G401 (cell line): ENCODE measurements at regions of chr17 and their contacts with region 1.

Region 1: DNA sequence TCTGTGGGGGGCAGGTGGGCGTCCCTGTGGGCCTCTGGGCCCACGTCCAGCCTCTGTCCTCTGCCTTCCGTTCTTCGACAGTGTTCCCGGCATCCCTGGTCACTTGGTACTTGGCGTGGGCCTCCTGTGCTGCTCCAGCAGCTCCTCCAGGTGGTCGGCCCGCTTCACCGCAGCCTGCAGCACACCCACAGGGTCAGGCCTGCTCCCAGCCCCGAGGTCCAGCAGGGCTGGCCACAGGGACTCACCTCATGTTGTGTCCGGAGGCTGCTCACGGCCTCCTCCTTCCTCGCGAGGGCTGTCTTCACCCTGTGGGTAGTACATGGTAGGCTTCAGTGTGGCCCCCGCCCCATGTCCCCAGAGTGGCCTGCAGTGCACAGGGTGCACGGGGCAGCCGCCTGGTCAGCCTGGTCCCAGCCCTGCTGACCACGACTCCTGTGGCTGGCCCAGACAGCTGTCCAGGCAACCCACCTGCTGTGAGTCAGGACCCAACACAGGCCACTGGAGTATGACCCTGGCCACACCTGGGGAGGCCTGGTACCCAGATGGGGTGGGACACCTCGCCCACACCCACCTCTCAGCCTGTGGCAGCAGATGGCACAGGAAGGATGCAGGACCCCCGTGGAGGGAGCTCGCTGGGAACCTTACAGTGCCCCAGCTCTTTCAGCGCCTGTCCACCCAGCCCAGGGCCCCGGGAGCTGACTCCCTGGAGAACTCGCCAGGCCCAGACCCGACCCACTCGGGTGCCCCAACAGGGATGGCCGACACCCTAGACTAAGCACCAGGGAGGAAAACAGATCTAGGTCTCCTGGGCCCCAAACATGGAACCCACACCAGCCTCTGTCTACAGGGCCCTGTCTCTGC is 23.9 kb upstream of the AATK start:
- DNase-seq: no peak

Region 2: DNA sequence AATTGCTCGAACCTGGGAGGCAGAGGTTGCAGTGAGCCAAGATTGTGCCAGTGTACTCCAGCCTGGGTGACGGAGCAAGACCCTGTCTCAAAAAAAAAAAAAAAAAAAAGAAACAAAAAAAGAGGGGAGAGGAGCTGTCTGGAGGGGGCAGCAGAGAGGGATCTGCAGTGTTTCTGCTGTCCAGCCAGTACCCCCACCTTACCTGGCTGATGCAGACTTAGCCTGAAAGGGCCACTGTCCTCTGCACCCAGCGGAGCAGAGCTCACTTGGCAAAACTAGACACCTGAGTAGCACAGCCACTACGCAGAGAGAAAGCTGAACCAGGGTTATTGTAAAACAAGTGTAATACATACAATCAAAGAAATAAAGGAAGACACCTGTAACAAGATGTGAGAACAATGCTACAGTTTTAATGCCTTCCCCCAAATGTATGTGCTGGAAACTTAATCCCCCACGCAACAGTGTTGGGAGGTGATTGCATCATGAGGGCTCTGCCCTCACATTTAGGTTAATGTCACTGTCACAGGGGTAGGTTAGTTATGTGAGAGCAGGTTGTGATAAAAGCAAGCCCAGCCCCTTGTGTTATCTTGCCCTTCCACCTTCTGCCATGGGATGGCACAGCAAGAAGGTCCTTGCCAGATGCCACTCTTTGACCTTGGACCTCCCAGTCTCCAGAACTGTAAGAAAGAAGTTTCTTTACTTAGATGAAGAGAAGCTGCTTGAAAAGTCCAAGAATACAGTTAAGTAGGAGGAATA is 434.1 kb before region 1 on chr17:
- in situ Hi-C with region 1: no loop called
- DNase-seq: no peak

Region 3: DNA sequence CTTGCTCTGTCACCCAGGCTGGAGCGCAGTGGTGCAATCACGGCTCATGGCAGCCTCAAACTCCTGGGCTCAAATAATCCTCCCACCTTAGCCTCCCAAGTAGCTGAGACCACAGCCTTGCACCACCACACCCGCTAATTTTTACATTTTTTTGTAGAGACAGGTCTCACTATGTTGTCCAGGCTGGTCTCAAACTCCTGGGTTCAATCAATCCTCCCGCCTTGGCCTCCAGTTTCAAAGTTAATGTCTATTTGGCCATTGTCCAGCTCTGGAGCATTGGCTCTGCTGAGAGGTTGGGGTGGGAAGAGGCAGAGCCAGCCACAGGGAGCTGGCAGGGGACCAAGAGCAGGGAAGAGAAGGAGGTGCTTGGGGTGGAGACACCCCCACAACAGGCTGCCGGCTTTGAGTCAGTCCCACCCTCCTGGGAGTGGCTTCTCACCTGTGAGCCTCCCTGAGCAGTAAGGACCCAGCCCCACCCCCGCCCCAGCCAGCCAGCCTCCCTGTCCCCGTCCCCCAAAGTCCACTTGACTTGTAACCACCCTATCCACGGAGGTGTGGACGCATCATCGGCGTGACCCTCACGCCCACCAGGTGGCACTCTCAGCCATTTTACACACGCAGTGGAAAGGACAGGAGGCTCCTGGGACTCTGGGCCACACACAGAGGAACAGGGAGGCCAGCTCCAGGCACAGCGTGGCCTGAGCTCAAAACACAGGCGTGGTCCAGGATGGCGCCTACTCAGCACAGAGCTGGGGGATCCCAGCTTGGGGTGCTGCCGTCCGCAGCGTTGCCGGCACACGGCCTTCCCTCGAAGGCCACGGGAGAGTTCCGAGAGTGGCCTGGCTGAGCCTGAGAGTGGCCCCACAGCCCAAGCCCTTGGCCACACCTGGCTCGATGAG is 47.4 kb before region 1 on chr17:
- in situ Hi-C with region 1: loop called (anchors 5 kb)
- DNase-seq: peak; percentile 81

Region 4: DNA sequence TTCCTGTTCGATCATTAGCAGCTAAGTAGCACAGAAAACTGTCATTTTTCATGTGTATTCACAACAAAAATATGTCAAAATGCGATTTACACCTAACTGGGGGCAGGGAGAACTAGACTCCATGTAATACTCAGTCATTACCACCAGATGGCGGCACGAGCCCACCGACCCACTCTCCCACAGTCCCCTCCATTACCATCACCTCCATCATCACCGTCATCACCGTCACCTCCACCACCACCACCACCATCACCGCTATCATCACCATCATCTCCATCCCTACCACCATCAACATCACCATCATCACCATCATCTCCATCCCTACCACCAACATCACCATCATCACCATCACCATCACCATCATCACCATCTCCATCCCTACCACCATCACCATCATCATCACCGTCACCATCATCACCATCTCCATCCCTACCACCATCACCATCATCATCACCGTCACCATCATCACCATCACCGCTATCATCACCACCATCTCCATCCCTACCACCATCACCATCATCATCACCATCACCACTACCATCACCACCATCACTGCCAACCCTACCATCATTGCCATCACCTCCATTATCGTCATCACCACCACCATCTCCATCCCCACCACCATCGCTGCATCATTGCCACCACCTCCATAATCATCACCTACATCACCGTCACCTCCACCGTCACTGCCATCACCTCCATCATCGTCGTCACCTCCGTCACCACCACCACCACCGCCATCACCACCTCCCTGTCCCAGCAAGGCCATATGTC is 63.6 kb after region 1 on chr17:
- in situ Hi-C with region 1: no loop called
- DNase-seq: peak; percentile 74